OCI-LY7 (cell line): ENCODE measurements at regions of chr22 and their contacts with region 1.

Region 1: GRCh38 chr22:40368016-40368415 is 2.4 kb upstream of the SGSM3 start:
- DNase-seq: no peak
- H3K4me3 ChIP-seq: no peak overlapping the region
- H3K27ac ChIP-seq: no peak overlapping the region
- H3K4me1 ChIP-seq: peaks cover 15% of the 10 kb centered on the region
- CTCF ChIP-seq: no peak

Region 2: GRCh38 chr22:40487663-40488249 is 119.7 kb after region 1 on chr22:
- CTCF ChIA-PET with region 1: no interaction called
- POLR2A ChIA-PET with region 1: no interaction called
- intact Hi-C with region 1: loop called (anchors 2 kb)
- DNase-seq: peak; percentile 67
- H3K4me3 ChIP-seq: no peak overlapping the region
- H3K27ac ChIP-seq: peak overlapping the region; percentile 40
- H3K4me1 ChIP-seq: peaks cover 48% of the 10 kb centered on the region
- CTCF ChIP-seq: peak; percentile 99